CD4-positive, alpha-beta memory T cell (primary cell): ENCODE measurements at regions of chr12 and their contacts with region 1.

Region 1: DNA sequence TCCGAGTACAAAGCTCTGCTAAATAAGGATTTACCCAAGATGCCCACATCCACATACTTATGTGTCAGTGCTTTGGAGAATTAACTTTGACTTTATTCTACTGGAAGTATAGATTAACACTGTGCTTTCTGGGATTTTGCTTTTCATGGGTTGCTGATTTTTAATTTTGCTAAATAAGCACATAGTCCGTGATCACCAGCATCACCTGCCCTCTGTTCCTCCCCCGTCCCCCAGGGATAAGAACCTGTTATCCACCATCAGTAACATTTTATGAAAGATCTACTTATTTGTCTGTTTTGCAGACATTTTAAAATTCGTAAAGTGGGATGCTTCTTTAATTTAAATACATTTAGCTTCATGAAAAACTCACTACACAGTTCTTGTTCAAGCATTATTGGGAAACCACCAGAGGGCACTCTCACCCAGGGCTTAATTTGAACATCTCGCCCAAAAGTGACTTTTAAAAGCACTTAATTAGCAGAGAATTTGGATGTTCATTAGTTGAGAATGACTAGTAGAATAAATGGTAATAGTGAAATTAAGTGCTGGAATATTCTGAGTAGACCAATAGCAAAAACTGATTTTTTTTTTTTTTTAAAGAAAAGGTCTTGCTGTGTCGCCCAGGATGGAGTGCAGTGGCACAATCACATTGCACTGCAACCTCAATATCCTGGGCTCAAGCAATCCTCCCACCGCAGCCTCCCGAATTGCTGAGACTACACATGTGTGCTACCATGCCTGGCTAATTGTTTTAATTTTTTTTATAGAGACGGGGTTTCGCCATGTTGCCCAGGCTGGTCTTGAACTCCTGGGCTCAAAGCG is 35.7 kb downstream of the MRPL42 start:
- DNase-seq: peak; percentile 53 to 65 (median 60)
- H3K4me3 ChIP-seq: no peak overlapping the region
- H3K4me3 Mint-ChIP-seq: no peak overlapping the region
- H3K27ac ChIP-seq: no peak overlapping the region
- H3K27ac Mint-ChIP-seq: peak overlapping the region in 2 of 7 donors; percentile 5 to 66
- H3K4me1 ChIP-seq: no peaks in the 10 kb centered on the region
- H3K4me1 Mint-ChIP-seq: peaks cover 0 to 6% (median 3%) of the 10 kb centered on the region in 4 donors
- H3K27me3 ChIP-seq: no peaks in the 10 kb centered on the region
- H3K27me3 Mint-ChIP-seq: no peaks in the 10 kb centered on the region

Region 2: DNA sequence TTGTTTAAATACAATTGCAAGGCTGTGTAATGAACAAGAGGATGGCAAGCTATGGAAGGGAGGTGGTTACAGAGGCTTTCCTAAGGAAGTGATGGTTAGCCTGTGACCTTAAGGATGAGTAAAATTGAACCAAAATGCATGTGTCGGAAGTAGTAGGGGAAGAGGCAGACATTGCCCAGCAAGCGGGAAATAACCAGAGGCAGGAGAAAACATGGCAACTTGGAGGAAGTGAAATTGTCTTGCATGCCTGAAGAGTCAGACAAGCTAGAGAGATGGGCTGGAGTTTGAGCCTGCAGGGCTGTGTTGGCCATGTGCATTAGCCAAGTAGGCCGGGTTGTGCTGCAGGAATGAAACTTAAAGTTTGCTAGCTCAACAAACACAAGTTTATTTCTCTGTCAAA is 1453.6 kb before region 1 on chr12:
- CTCF ChIA-PET with region 1: no interaction called
- POLR2A ChIA-PET with region 1: no interaction called
- intact Hi-C with region 1: no loop called
- DNase-seq: peak in 1 of 5 donors; percentile 35
- H3K4me3 ChIP-seq: no peak overlapping the region
- H3K4me3 Mint-ChIP-seq: peak overlapping the region in 2 of 8 donors; percentile 49 to 51
- H3K27ac ChIP-seq: no peak overlapping the region
- H3K27ac Mint-ChIP-seq: peak overlapping the region in 2 of 7 donors; percentile 11 to 31
- H3K4me1 ChIP-seq: peaks cover 56% of the 10 kb centered on the region
- H3K4me1 Mint-ChIP-seq: peaks cover 36 to 82% (median 59%) of the 10 kb centered on the region in 4 donors
- H3K27me3 ChIP-seq: no peaks in the 10 kb centered on the region
- H3K27me3 Mint-ChIP-seq: no peaks in the 10 kb centered on the region

Region 3: DNA sequence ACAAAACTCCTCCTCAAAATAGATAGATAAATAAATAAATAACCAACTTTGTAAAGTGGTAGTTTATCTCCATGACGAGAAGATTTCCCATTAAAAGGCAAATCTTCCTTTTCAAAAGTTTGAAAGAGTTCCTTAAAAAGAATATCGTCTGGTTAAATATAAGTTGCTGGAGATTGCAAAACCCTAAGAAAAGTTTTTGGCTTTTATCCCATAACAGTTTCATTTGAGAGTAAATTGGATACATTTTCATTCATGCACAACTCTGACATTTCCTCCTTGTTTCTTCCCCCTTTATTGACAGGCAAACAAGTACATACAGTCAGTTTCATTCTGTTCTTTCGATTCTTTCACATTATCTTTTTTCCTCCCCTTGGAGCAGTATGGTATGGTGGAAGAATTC is 1312.0 kb before region 1 on chr12:
- CTCF ChIA-PET with region 1: no interaction called
- POLR2A ChIA-PET with region 1: no interaction called
- intact Hi-C with region 1: no loop called
- DNase-seq: no peak
- H3K4me3 ChIP-seq: no peak overlapping the region
- H3K4me3 Mint-ChIP-seq: no peak overlapping the region
- H3K27ac ChIP-seq: no peak overlapping the region
- H3K27ac Mint-ChIP-seq: no peak overlapping the region
- H3K4me1 ChIP-seq: peaks cover 12% of the 10 kb centered on the region
- H3K4me1 Mint-ChIP-seq: peaks cover 12 to 26% (median 16%) of the 10 kb centered on the region in 4 donors
- H3K27me3 ChIP-seq: no peaks in the 10 kb centered on the region
- H3K27me3 Mint-ChIP-seq: no peaks in the 10 kb centered on the region

Region 4: DNA sequence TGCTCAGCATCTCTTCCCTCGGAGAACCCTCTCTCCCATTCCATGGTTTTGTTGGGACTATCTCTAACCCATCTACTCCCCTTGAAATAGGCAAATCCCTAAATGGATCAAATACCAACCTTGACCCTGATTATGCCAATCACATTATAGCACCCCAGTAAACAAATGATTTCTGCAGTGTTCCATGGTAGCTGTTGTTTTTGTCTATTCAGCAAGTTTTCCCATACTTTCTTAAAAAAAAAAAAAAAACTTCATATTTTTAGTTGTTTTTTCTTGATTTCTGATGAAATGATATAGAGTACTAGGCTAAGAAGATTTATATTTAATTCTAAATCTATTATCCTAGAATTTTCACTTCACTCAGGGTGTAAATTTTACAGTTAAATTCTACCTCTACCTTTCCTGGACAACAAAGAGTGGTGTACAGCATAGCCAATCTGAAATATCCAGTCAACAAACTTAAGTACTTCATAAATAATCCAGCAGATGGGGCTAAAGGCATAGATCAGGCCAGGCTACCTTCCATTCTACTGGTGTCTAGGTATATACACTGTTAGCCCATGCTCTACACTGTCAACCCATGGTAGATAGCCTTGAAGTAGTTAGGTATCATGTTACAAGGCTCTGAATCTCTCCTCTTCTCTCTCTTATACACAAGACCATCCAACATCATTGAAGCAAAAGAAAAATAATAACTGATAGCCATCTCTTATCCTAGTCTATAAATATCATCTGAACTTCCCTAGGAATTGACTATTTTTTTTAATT is 718.0 kb before region 1 on chr12:
- CTCF ChIA-PET with region 1: no interaction called
- POLR2A ChIA-PET with region 1: no interaction called
- intact Hi-C with region 1: loop called (anchors 1 kb)
- DNase-seq: peak; percentile 54 to 73 (median 67)
- H3K4me3 ChIP-seq: no peak overlapping the region
- H3K4me3 Mint-ChIP-seq: no peak overlapping the region
- H3K27ac ChIP-seq: no peak overlapping the region
- H3K27ac Mint-ChIP-seq: peak overlapping the region in 1 of 7 donors; percentile 4
- H3K4me1 ChIP-seq: no peaks in the 10 kb centered on the region
- H3K4me1 Mint-ChIP-seq: peaks cover 0 to 4% (median 2%) of the 10 kb centered on the region in 4 donors
- H3K27me3 ChIP-seq: no peaks in the 10 kb centered on the region
- H3K27me3 Mint-ChIP-seq: no peaks in the 10 kb centered on the region

Region 5: GRCh38 chr12:93514853-93515252 is 11.8 kb after region 1 on chr12:
- CTCF ChIA-PET with region 1: interaction called, 10 read pairs
- POLR2A ChIA-PET with region 1: no interaction called
- intact Hi-C with region 1: no loop called
- DNase-seq: no peak
- H3K4me3 ChIP-seq: no peak overlapping the region
- H3K4me3 Mint-ChIP-seq: no peak overlapping the region
- H3K27ac ChIP-seq: no peak overlapping the region
- H3K27ac Mint-ChIP-seq: peak overlapping the region in 2 of 7 donors; percentile 46 to 59
- H3K4me1 ChIP-seq: no peaks in the 10 kb centered on the region
- H3K4me1 Mint-ChIP-seq: peaks cover 0 to under 1% (median 0%) of the 10 kb centered on the region in 4 donors
- H3K27me3 ChIP-seq: no peaks in the 10 kb centered on the region
- H3K27me3 Mint-ChIP-seq: no peaks in the 10 kb centered on the region

Region 6: GRCh38 chr12:93766796-93767523 is 263.9 kb after region 1 on chr12:
- CTCF ChIA-PET with region 1: interaction called, 14 read pairs
- POLR2A ChIA-PET with region 1: no interaction called
- intact Hi-C with region 1: loop called (anchors 5 kb)
- DNase-seq: peak; percentile 33 to 58 (median 37)
- H3K4me3 ChIP-seq: no peak overlapping the region
- H3K4me3 Mint-ChIP-seq: peak overlapping the region in 5 of 8 donors; percentile 1 to 60 (median 21)
- H3K27ac ChIP-seq: no peak overlapping the region
- H3K27ac Mint-ChIP-seq: peak overlapping the region; percentile 2 to 83 (median 12)
- H3K4me1 ChIP-seq: peaks cover 23% of the 10 kb centered on the region
- H3K4me1 Mint-ChIP-seq: peaks cover 18 to 32% (median 24%) of the 10 kb centered on the region in 4 donors
- H3K27me3 ChIP-seq: no peaks in the 10 kb centered on the region
- H3K27me3 Mint-ChIP-seq: no peaks in the 10 kb centered on the region

Region 7: GRCh38 chr12:94074980-94075928 is 572.2 kb after region 1 on chr12:
- CTCF ChIA-PET with region 1: interaction called, 12 read pairs
- POLR2A ChIA-PET with region 1: no interaction called
- intact Hi-C with region 1: no loop called
- DNase-seq: no peak
- H3K4me3 ChIP-seq: no peak overlapping the region
- H3K4me3 Mint-ChIP-seq: no peak overlapping the region
- H3K27ac ChIP-seq: no peak overlapping the region
- H3K27ac Mint-ChIP-seq: no peak overlapping the region
- H3K4me1 ChIP-seq: no peaks in the 10 kb centered on the region
- H3K4me1 Mint-ChIP-seq: peaks cover 14 to 25% (median 20%) of the 10 kb centered on the region in 4 donors
- H3K27me3 ChIP-seq: no peaks in the 10 kb centered on the region
- H3K27me3 Mint-ChIP-seq: peaks cover 1 to 5% of the 10 kb centered on the region in 2 donors